CD14-positive monocyte (primary cell): ENCODE measurements at regions of chr14 and their contacts with region 1.

Region 1: DNA sequence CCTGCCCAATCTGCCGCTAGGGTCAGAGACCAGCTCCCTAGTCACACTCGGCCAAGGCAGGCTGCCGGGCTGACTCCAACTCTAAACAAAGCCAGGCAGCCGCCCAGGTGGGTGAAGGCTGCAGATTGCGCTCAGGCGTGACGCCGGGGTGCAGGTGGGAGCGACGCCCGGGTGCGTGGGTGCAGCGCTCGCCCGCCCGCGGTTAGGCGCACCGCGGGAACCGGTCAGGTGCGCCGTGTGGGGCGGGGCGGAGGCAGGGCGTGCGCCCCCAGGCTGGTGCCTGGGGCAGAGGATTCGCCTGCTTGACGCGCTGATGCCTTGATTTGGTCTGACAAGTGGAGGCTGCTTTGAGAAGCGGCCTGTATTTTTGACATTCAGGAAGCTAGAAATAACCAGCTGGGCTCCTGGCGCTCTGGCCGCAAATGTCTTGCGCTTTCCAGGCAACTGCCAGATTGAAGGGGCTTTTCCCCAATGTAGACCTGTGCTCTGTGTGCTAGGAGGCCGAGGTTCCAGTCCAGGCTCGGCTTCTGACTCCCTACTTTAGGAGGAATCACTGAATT is 126.7 kb upstream of the HIF1A start:
- DNase-seq: peak in 2 of 3 donors; percentile 16 to 36
- H3K4me3 ChIP-seq: peak overlapping the region; percentile 7 to 70 (median 15)
- H3K4me3 Mint-ChIP-seq: peak overlapping the region; percentile 81 to 92
- H3K27ac ChIP-seq: peak overlapping the region; percentile 43 to 89
- H3K27ac Mint-ChIP-seq: peak overlapping the region; percentile 98 to 100 (median 100)
- H3K4me1 ChIP-seq: peaks cover 67 to 77% of the 10 kb centered on the region in 2 donors
- H3K4me1 Mint-ChIP-seq: peaks cover 83% of the 10 kb centered on the region
- H3K27me3 ChIP-seq: no peaks in the 10 kb centered on the region
- H3K27me3 Mint-ChIP-seq: peaks cover 0 to 2% (median 2%) of the 10 kb centered on the region in 3 donors
- CTCF ChIP-seq: no peak

Region 2: DNA sequence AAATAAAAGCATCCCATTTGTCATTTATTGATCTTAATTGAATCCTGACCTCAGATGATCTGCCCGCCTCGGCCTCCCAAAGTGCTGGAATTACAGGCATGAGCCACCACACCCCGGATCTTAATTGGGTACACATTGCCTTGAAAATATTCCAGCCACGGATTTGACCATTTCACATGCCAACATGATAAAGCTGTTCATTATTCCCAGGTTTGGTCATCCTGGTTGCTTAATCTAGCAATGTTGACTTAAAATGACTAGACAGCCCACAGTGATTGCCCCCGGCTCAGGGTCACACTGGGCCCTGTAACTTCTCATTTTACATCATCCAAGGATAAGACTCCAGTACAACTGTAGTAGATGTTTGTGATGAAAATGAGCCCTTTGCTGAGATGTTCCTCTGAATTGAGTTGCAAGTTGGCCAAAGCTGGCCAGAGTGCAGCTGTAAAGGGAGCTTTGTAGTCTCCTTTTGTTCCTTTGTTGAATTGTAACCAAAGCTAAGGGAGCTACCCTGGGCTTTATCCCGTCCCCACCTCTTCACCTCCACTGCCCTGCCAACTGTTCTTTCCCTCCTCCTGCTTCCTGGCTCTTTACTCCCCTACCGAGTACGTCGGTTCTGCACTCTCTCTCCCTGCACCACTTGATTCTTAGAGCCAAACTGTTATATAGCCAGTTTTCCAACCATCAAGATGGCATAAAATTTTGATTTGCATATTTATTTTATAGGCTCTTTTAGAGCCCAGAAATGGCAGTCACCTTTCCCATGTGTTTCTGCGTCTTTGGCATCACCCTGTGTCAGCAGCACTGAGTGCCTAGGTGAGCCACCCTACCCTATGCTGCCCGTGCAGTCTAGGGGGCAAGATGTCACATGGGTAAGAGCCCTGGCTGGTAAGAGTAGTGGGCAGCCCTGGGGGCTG is 14.7 kb before region 1 on chr14:
- intact Hi-C with region 1: loop called in 1 of 2 experiments (anchors 2 kb)
- DNase-seq: peak; percentile 80 to 93 (median 90)
- H3K4me3 ChIP-seq: peak overlapping the region in 1 of 3 experiments; percentile 3
- H3K4me3 Mint-ChIP-seq: peak overlapping the region; percentile 55 to 59
- H3K27ac ChIP-seq: peak overlapping the region; percentile 92 to 94
- H3K27ac Mint-ChIP-seq: peak overlapping the region; percentile 98 to 100 (median 98)
- H3K4me1 ChIP-seq: peaks cover 35 to 47% of the 10 kb centered on the region in 2 donors
- H3K4me1 Mint-ChIP-seq: peaks cover 50% of the 10 kb centered on the region
- H3K27me3 ChIP-seq: no peaks in the 10 kb centered on the region
- H3K27me3 Mint-ChIP-seq: no peaks in the 10 kb centered on the region
- CTCF ChIP-seq: no peak

Region 3: GRCh38 chr14:61589691-61590521 is 21.3 kb after region 1 on chr14:
- intact Hi-C with region 1: loop called in 1 of 2 experiments (anchors 2 kb)
- DNase-seq: no peak
- H3K4me3 ChIP-seq: no peak overlapping the region
- H3K4me3 Mint-ChIP-seq: no peak overlapping the region
- H3K27ac ChIP-seq: no peak overlapping the region
- H3K27ac Mint-ChIP-seq: peak overlapping the region in 1 of 7 donors; percentile 4
- H3K4me1 ChIP-seq: peaks cover 16 to 23% of the 10 kb centered on the region in 2 donors
- H3K4me1 Mint-ChIP-seq: peaks cover 33% of the 10 kb centered on the region
- H3K27me3 ChIP-seq: no peaks in the 10 kb centered on the region
- H3K27me3 Mint-ChIP-seq: peaks cover 0 to 5% (median 2%) of the 10 kb centered on the region in 3 donors
- CTCF ChIP-seq: no peak

Region 4: DNA sequence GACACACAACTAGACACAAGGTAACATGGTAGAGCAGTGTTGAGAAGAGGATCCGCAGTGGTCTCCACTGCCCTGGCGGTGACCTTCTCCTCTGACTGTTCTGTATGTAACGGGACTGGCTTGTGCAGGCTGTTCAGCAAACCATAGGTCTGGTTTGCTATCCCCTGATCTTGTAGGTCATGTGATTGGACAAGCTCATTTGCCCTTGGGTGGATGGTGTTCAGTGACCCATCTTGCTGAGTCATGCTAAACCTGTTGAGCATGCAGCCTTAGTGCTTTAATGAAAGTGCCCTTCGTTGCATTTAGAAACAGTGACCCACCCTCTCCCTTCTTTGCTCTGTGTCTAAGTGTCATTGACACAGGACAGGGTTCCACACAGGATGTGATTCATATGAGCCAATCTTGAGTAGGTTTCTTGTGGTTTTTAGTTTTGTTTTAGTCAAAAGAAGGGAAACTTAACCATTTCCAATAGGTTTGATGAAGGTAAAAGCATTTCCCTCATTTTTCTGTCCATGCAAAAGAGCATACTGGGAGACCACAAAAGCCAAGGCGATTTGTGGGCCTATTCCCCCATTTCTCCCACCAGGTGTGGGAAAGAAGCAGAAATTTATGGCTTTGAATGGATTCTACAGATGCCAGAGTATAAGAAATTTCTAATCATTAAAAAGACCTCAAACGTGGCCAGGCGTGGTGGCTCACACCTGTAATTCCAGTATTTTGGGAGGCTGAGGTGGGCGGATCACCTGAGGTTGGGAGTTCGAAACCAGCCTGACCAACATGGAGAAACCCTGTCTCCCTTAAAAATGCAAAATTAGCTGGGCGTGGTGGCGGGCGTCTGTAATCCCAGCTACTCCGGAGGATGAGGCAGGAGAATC is 94.0 kb after region 1 on chr14:
- intact Hi-C with region 1: loop called in 1 of 2 experiments (anchors 5 kb)
- DNase-seq: peak; percentile 90 to 94 (median 92)
- H3K4me3 ChIP-seq: peak overlapping the region; percentile 12 to 60 (median 25)
- H3K4me3 Mint-ChIP-seq: peak overlapping the region; percentile 51 to 55
- H3K27ac ChIP-seq: peak overlapping the region; percentile 80 to 87
- H3K27ac Mint-ChIP-seq: peak overlapping the region; percentile 92 to 98 (median 96)
- H3K4me1 ChIP-seq: peaks cover 55 to 68% of the 10 kb centered on the region in 2 donors
- H3K4me1 Mint-ChIP-seq: peaks cover 61% of the 10 kb centered on the region
- H3K27me3 ChIP-seq: no peaks in the 10 kb centered on the region
- H3K27me3 Mint-ChIP-seq: no peaks in the 10 kb centered on the region
- CTCF ChIP-seq: no peak

Region 5: DNA sequence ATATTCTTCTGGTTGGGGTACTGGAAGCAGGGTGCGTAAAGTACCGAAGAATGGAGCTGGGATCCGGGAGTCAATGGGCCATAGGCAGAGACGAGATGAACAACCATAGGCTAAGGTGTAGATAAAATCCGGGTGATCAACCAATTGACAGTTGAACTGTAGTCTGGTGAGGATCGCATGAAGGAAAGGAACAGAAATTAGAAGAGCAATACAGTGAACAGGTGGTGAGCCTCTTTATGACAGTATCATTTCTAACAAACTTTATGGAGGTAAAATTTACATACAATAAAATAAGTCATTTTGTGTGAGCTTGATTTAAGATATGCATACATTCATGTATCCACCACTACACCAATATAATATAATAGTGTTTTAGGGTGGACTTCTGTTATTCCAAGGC is 112.8 kb after region 1 on chr14:
- intact Hi-C with region 1: no loop called
- DNase-seq: no peak
- H3K4me3 ChIP-seq: no peak overlapping the region
- H3K4me3 Mint-ChIP-seq: no peak overlapping the region
- H3K27ac ChIP-seq: no peak overlapping the region
- H3K27ac Mint-ChIP-seq: no peak overlapping the region
- H3K4me1 ChIP-seq: peaks cover 13 to 23% of the 10 kb centered on the region in 2 donors
- H3K4me1 Mint-ChIP-seq: peaks cover 11% of the 10 kb centered on the region
- H3K27me3 ChIP-seq: no peaks in the 10 kb centered on the region
- H3K27me3 Mint-ChIP-seq: peaks cover 0 to 2% (median 1%) of the 10 kb centered on the region in 3 donors
- CTCF ChIP-seq: no peak